ENCODE measurements at regions of chr15 and their contacts with region 1.

Region 1: DNA sequence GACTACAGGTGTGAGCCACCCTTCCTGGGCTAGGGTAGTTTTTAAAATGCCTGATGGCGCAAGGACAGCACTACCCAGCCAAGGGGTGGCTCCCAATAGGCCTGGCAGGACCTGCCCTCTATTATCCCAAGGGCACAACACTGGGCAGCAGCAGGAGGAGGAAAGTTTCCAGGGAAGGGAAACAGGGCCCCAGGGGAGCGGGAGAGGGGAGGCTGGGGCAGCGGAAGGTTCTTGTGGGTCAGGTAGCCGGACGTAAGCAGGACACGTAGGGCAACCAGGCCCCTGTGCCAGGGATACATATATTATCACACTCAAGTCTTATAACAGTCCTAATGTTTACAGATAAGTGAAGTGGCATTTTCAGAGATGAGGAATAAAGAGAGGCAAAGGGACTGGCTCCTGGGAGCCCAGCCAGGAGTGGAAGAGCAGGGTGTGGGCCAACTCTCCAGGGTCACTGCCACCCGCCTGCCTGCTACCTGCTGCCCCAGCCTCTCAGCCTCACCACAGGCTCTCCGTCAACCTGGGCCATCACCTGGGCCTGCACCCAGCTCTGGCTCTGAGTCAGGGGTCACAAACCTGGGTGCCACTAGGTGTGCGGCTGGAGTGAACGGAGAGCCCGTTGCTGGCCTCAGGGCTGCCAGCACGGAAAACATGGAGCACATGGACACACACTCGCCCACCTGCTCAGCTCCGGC is 73.2 kb upstream of the SNRPA1 start:
- DNase-seq: no peak
- ATAC-seq: peak; percentile 84

Region 2: GRCh38 chr15:101426881-101427280 is 58.6 kb after region 1 on chr15:
- intact Hi-C with region 1: no loop called
- DNase-seq: no peak
- ATAC-seq: no peak

Region 3: DNA sequence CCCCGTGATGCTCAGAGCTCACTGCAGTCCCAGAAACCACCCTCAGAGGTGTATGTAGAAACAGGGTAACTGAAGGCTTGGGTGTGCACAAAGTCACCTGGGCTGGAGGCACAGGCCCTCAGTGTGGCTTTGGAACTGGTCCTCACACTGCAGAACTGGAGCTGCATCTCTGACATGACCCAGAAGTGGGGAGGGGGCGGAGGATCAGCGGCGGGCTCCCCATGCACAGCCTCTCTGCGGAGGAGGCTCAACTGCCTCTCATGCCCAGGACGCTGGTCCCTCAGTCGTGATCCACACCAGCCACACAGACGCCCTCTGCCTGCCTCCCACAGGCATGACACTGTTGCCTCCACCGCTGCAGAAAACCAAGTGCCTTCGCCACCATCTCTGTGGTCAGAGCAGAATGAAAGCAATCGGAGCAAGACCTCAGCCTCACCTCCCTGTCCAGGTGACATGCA is 210.2 kb after region 1 on chr15:
- intact Hi-C with region 1: loop called (anchors 10 kb)
- DNase-seq: no peak
- ATAC-seq: peak; percentile 42

Region 4: DNA sequence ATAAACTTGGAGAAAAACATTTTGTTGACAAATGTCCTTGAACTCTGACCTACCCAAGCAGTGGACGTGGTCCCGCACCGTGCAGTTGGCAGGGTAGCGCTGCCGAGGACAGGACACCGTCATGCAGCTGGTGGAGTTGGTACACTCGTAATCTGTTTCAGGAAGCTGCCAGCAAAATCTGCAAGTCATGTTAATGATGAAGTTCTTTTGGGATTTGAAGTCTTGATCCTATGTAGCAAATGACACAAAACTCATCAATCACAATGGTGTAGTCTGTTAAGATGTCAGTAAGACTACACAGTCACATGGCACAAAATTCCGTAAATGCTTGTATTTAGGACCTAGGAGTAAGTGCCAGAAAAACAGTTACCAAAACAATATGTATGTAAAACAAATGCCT is 278.4 kb after region 1 on chr15:
- intact Hi-C with region 1: loop called (anchors 5 kb)
- DNase-seq: peak; percentile 70
- ATAC-seq: peak; percentile 77

Measured in Right ventricle myocardium inferior (tissue), 1 donor.